Heart right ventricle (tissue), 16 donors: ENCODE measurements at regions of chr14 and their contacts with region 1.

Region 1: GRCh38 chr14:54338696-54339317 is 58.0 kb upstream of the CDKN3 start:
- DNase-seq: no peak
- ATAC-seq: peak in 1 of 8 donors; percentile 40
- H3K4me3 ChIP-seq: no peak overlapping the region
- H3K27ac ChIP-seq: no peak overlapping the region
- H3K4me1 ChIP-seq: peaks cover 0 to 12% (median 4%) of the 10 kb centered on the region in 9 donors
- H3K27me3 ChIP-seq: peaks cover 0 to 9% (median 0%) of the 10 kb centered on the region in 7 donors
- CTCF ChIP-seq: peak in 5 of 9 donors; percentile 26 to 45 (median 39)

Region 2: GRCh38 chr14:53432378-53432802 is 906.4 kb before region 1 on chr14:
- intact Hi-C with region 1: loop called in 1 of 10 experiments (anchors 10 kb)
- DNase-seq: no peak
- ATAC-seq: peak in 4 of 8 donors; percentile 44 to 77 (median 54)
- H3K4me3 ChIP-seq: no peak overlapping the region
- H3K27ac ChIP-seq: no peak overlapping the region
- H3K4me1 ChIP-seq: no peaks in the 10 kb centered on the region
- H3K27me3 ChIP-seq: no peaks in the 10 kb centered on the region
- CTCF ChIP-seq: peak in 8 of 9 donors; percentile 33 to 62 (median 54)